ENCODE measurements at regions of chr5 and their contacts with region 1.

Region 1: GRCh38 chr5:171336521-171337209 is 27.6 kb downstream of the TLX3 start:
- DNase-seq: peak; percentile 54
- H3K4me3 ChIP-seq: peak overlapping the region; percentile 19 to 39 (median 20)
- H3K27ac ChIP-seq: no peak overlapping the region
- H3K4me1 ChIP-seq: no peaks in the 10 kb centered on the region
- H3K27me3 ChIP-seq: peaks cover 5% of the 10 kb centered on the region
- CTCF ChIP-seq: peak; percentile 32 to 76

Region 2: DNA sequence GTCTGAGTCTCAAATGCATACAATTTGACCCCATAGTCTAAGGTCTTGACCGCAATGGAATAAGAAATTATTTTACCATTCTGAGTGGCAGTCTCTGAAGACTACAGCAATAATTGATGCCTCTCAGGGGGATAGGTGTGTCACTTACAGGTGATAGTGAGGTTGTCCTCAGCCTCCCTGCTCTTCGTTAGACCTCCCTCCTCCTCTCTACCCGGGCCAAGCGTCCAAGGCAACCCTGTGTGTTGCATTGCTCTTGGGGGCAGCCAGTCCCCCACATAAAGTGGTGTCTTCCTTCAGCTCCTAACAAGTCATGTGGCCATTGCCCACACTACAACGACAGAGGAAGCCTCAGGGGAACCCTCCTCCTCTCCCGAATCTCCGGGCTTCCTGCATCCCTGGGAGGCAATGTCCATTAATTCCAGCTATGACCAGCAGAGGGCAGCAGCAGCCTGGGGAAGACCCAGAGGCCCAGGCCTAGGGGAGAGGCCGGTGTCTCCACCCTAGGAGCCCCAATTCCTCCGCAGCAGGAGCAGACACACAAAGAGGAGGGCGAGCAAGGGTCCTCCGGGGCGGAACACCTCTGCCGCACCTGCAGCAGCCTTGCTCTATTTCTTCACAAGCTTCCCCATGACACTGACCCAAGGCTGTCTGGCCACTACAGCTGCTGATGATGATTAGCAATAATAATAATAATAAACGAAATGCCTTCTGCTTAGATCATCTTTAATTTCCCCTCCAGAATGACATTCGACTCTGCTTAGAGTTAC is 698.0 kb before region 1 on chr5:
- CTCF ChIA-PET with region 1: no interaction called
- dilution Hi-C with region 1: no loop called
- in situ Hi-C with region 1: loop called in 1 of 2 experiments (anchors 25 kb)
- intact Hi-C with region 1: loop called (anchors 5 kb)
- DNase-seq: peak; percentile 35
- H3K4me3 ChIP-seq: no peak overlapping the region
- H3K27ac ChIP-seq: no peak overlapping the region
- H3K4me1 ChIP-seq: peaks cover 7% of the 10 kb centered on the region
- H3K27me3 ChIP-seq: no peaks in the 10 kb centered on the region
- CTCF ChIP-seq: peak; percentile 70 to 92

Region 3: DNA sequence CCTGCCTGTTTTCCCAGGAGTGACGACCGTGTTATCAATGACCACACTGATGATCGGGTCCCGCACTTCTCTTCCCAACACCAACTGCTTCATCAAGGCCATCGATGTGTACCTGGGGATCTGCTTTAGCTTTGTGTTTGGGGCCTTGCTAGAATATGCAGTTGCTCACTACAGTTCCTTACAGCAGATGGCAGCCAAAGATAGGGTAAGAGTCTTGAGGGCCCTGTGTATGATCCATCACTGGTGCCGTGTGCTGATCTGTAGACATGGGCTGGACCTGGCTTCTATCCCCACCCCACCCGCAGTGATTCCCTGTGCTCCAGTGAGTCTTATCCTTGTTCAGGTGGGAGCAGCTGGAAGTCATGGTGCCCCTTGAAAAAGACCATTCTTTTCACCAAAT is 527.1 kb before region 1 on chr5:
- CTCF ChIA-PET with region 1: no interaction called
- dilution Hi-C with region 1: no loop called
- in situ Hi-C with region 1: loop called (anchors 25 kb)
- intact Hi-C with region 1: loop called (anchors 1 kb)
- DNase-seq: peak; percentile 23
- H3K4me3 ChIP-seq: no peak overlapping the region
- H3K27ac ChIP-seq: no peak overlapping the region
- H3K4me1 ChIP-seq: no peaks in the 10 kb centered on the region
- H3K27me3 ChIP-seq: no peaks in the 10 kb centered on the region
- CTCF ChIP-seq: peak; percentile 3 to 54

Region 4: GRCh38 chr5:170986598-170986997 is 350.1 kb before region 1 on chr5:
- CTCF ChIA-PET with region 1: no interaction called
- dilution Hi-C with region 1: no loop called
- in situ Hi-C with region 1: loop called in 1 of 2 experiments (anchors 25 kb)
- intact Hi-C with region 1: loop called (anchors 2 kb)
- DNase-seq: peak; percentile 3
- H3K4me3 ChIP-seq: no peak overlapping the region
- H3K27ac ChIP-seq: no peak overlapping the region
- H3K4me1 ChIP-seq: no peaks in the 10 kb centered on the region
- H3K27me3 ChIP-seq: no peaks in the 10 kb centered on the region
- CTCF ChIP-seq: peak; percentile 16 to 37

Region 5: DNA sequence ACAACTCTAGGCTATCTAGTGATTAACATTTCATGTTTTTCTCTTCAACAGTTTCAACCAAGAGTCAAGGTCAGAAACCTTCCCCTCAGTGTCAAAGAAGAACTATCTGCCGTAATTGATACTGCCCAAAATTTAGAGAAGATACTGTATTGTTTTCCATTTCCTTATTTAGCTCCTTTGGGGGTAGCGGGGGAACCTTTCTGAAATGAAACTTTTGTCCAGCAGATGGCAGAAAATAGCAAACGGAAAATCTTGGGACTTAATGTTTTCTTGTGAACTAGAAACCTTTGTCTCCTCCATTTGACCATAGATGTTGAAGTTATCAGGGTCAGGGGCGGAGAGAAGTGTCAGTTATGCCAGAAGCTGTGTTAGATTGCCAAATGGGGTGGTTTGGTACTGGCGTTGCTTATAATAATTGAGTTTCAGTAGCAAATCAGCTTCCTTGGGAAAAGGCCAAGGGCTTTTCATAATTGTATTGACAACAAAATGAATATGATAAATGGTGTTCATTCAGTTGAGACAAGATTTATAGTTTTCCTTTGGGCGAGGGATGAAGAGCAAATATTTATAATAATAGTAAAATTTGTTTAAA is 129.3 kb before region 1 on chr5:
- CTCF ChIA-PET with region 1: interaction called, 3 read pairs
- dilution Hi-C with region 1: no loop called
- in situ Hi-C with region 1: loop called (anchors 5 to 10 kb)
- intact Hi-C with region 1: loop called (anchors 1 kb)
- DNase-seq: peak; percentile 16
- H3K4me3 ChIP-seq: no peak overlapping the region
- H3K27ac ChIP-seq: no peak overlapping the region
- H3K4me1 ChIP-seq: no peaks in the 10 kb centered on the region
- H3K27me3 ChIP-seq: no peaks in the 10 kb centered on the region
- CTCF ChIP-seq: peak; percentile 54 to 58

Region 6: DNA sequence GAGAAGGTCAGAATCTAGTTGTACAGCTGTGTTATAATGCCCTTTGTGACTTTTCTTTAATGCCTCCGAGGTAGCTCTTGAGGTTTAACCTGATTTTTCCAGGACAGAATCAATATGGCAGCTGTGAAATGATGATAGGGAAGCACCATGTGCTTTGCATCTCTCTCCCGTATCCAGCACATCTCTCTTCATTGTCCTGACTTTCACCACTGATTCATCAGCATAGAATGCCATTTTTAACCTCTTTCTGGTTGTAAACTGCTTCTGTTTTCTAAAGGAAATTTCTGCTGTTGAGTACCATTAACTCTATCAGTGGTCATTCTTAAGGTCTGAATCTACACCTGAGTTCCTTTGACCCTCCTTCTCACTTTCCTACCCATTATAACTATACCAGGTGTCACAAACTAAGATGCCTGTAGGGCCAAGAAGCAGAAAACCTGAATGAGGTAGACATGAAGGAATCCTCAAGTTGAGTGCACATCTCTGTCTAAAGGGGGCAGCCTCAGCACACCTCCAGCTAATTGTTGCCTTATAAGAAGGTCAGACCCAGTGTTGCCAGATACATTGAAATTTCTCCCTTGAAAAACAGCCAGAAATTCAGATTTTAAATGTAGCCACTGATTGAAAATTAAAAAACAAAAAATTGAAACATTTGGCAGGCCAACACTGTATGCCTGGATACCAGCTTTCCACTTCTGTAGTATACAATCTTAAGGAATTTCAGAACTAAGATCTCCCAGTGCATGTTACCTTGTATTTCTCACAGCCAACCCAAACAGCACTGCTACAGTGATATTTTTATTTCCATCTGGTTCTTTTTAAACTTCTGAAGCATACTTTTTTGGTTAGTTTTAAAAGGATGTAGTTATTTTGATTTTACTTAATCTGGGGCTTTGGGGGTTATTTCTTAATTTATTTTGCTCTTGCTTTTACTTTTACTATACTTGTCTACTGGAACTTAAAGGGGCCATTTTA is 63.4 kb before region 1 on chr5:
- CTCF ChIA-PET with region 1: no interaction called
- dilution Hi-C with region 1: loop called (anchors 5 kb)
- in situ Hi-C with region 1: no loop called
- intact Hi-C with region 1: loop called (anchors 1 kb)
- DNase-seq: peak; percentile 21
- H3K4me3 ChIP-seq: no peak overlapping the region
- H3K27ac ChIP-seq: no peak overlapping the region
- H3K4me1 ChIP-seq: no peaks in the 10 kb centered on the region
- H3K27me3 ChIP-seq: no peaks in the 10 kb centered on the region
- CTCF ChIP-seq: peak; percentile 40 to 47

Measured in mammary epithelial cell (primary cell).